Dendritic cell treated with granulocyte-macrophage colony-stimulating factor and Interleukin-4, amounts not matched to agents 40 ng/mL and 50 ng/mL, for 4 days (primary cell): ENCODE measurements at regions of chr9 and their contacts with region 1.

Region 1: DNA sequence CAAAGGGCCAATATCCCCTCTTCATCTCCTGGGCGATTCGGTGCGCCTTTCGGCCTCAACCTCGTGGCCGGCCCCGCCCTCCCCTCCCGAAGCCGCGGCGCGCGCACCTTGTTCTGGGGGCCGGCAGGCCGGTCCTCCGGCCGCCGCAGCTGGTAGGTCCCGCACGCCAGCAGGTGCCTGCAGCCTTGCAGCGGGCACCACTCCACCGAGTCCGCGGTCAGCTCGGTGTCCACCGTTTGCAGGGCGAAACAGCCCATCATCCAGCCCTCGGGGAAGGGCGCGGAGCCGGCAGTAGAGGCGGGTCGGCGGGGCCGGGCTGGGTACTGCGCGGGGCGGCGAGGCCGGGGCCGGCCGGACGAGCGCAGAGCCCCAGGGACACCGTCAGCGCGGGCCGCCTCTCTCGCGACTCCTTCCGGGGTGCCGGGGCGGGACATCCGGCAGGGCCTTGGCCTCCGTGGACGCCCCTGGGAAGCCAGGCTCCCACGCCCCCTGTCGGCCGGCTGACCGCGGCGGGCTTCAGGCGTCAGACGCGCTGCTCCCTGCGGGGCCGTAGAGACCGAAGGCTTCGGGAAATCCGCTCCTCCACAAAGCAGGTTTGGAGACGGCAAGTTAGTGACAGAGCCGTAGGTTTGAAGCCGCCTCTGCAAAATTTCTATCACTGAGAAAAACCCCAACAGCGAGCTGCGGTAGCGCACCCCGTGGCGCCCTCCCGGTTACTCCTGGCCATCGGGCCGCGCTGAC is at the start of gene DPH7:
- H3K4me3 Mint-ChIP-seq: peak within 1 kb of the TSS; percentile 83
- H3K27ac Mint-ChIP-seq: peak within 1 kb of the TSS; percentile 72
- H3K4me1 Mint-ChIP-seq: peaks cover 40% of the 10 kb centered on the region
- H3K27me3 Mint-ChIP-seq: no peaks in the 10 kb centered on the region

Region 2: GRCh38 chr9:137516144-137516917 is 62.4 kb before region 1 on chr9:
- intact Hi-C with region 1: no loop called
- H3K4me3 Mint-ChIP-seq: no peak overlapping the region
- H3K27ac Mint-ChIP-seq: no peak overlapping the region
- H3K4me1 Mint-ChIP-seq: peaks cover 5% of the 10 kb centered on the region
- H3K27me3 Mint-ChIP-seq: no peaks in the 10 kb centered on the region

Region 3: DNA sequence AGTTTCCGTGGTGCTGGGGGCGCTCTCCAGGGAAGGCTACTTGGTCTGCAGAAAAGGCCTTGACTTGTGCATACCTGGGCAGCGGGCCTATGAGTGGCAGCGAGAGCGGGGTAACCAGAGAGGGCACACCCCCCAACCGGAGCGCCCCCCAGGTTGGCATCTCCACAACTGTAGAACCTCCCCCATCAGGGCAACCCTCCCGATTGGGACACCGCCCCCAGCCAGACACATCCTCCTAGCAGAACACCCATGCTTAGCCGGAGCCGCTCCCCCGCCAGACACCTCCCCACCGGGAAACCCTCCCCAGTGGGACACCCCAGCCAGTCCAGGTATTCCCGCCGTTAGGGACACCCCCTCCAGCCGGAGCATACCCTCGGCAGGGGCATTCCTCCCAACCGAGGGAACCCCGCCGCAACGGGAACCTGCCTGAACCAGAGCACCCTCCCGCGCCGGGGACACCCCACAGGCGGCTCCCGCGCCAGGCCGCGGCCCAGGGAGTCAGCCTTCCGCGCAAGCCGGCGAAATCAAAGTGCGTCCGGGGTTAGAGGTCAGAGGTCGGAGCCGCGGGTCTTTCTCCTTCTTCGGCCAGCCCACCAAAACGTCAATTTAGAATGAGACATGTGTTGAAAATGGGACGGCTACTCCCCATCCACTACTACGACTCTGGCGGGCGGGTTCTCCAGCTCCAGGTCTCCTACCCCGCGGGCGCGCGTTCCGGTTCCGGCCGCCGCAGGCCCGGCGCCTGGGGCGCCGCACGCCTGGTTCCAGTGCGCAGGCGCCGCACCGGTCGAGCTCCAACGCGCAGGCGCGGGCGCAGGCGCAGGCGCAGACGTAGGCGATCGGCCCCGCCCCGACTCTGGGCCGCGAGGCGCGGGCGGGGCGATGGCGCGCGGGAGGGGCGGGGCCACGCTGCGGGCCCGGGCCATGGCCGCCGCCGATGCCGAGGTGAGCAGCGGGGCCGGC is 39.7 kb after region 1 on chr9 and contains the start of gene EHMT1:
- intact Hi-C with region 1: loop called (anchors 2 kb)
- H3K4me3 Mint-ChIP-seq: peak within 1 kb of the TSS; percentile 86
- H3K27ac Mint-ChIP-seq: peak within 1 kb of the TSS; percentile 91
- H3K4me1 Mint-ChIP-seq: peaks cover 51% of the 10 kb centered on the region
- H3K27me3 Mint-ChIP-seq: no peaks in the 10 kb centered on the region

Region 4: DNA sequence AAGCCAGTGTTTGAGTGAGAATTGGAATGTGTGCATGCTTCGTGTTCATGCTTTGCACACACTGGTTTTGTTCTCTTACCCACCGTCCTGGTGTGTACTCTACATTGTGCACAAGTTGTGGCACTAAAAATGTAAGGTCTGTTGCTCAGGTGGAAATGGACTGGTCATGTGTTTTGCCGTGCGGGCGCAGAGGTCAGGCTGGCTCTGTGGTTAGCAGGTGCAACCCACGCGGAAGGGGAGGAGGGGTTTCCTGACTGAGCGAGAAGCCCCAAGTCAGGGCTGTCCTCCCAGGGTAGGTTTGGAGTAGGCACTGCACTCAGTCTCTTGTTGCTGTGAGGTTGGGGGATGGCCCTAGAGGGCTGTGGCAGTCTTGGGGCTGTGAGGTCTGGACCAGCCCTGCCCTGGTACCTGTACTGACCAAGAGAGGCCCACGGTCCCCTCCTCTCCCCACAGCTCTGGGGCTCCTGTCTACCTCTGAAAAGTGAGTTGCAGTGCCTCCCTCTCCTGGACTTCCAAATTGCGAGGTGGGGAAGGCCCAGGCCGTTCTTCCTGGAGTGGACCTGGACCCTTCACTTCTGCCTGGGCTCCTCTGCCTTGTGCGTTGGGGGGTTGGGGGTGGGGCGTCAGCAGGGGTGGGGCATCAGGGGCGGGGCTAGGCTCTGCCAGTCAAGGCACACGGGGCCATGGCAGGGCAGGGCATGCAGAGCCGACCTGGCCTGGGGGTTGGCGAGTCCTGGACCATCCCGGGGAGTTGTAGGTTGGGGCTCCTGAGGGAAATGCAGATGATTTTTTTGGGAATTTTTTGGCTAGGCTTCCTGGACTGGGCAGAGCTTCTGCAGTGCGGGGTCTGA is 127.0 kb after region 1 on chr9:
- intact Hi-C with region 1: no loop called
- H3K4me3 Mint-ChIP-seq: no peak overlapping the region
- H3K27ac Mint-ChIP-seq: peak overlapping the region; percentile 52
- H3K4me1 Mint-ChIP-seq: peaks cover 33% of the 10 kb centered on the region
- H3K27me3 Mint-ChIP-seq: no peaks in the 10 kb centered on the region